SK-N-SH (cell line): ENCODE measurements at regions of chr5 and their contacts with region 1.

Region 1: GRCh38 chr5:81165493-81166119 is 67.5 kb upstream of the CKMT2 start:
- DNase-seq: peak; percentile 72
- H3K4me3 ChIP-seq: peak overlapping the region in 1 of 2 experiments; percentile 17; a peak in 1 of 4 replicates
- H3K27ac ChIP-seq: no peak overlapping the region
- H3K4me1 ChIP-seq: peaks cover 0 to 13% of the 10 kb centered on the region in 2 experiments; a peak in 1 of 4 replicates
- H3K27me3 ChIP-seq: no peaks in the 10 kb centered on the region
- CTCF ChIP-seq: peak; percentile 65
- EP300 ChIP-seq: no peak
- RAD21 ChIP-seq: peak; percentile 93

Region 2: GRCh38 chr5:80686757-80687156 is 478.8 kb before region 1 on chr5:
- CTCF ChIA-PET with region 1: interaction called, 10 read pairs
- POLR2A ChIA-PET with region 1: no interaction called
- DNase-seq: no peak
- H3K4me3 ChIP-seq: no peak overlapping the region; a peak in 1 of 4 replicates
- H3K27ac ChIP-seq: no peak overlapping the region
- H3K4me1 ChIP-seq: no peaks in the 10 kb centered on the region
- H3K27me3 ChIP-seq: no peaks in the 10 kb centered on the region
- CTCF ChIP-seq: peak; percentile 64
- EP300 ChIP-seq: no peak
- RAD21 ChIP-seq: peak; percentile 67

Region 3: DNA sequence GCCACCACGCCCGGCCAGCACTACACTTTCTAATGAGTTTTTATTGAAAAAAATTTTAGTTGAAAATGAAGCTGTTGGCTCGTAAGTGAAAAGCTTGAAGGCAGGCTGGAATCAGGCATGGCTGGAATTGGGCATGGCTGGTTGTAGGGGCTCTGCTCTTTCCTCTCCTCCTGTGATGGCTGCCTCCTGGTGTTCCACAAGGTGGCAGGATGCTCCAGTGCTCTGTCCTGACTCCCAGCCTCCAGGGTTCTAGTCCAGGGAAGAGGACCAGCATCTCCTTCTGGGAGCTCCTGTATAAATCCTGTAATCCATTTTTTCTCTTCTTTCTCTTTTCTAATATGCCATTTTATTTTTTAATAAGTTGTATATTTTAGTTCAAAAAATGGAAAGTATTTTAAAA is 453.7 kb before region 1 on chr5:
- CTCF ChIA-PET with region 1: interaction called, 24 read pairs
- POLR2A ChIA-PET with region 1: no interaction called
- DNase-seq: peak; percentile 58
- H3K4me3 ChIP-seq: no peak overlapping the region
- H3K27ac ChIP-seq: no peak overlapping the region
- H3K4me1 ChIP-seq: no peaks in the 10 kb centered on the region; a peak in 2 of 4 replicates
- H3K27me3 ChIP-seq: no peaks in the 10 kb centered on the region
- CTCF ChIP-seq: peak; percentile 53
- EP300 ChIP-seq: no peak
- RAD21 ChIP-seq: peak; percentile 77

Region 4: DNA sequence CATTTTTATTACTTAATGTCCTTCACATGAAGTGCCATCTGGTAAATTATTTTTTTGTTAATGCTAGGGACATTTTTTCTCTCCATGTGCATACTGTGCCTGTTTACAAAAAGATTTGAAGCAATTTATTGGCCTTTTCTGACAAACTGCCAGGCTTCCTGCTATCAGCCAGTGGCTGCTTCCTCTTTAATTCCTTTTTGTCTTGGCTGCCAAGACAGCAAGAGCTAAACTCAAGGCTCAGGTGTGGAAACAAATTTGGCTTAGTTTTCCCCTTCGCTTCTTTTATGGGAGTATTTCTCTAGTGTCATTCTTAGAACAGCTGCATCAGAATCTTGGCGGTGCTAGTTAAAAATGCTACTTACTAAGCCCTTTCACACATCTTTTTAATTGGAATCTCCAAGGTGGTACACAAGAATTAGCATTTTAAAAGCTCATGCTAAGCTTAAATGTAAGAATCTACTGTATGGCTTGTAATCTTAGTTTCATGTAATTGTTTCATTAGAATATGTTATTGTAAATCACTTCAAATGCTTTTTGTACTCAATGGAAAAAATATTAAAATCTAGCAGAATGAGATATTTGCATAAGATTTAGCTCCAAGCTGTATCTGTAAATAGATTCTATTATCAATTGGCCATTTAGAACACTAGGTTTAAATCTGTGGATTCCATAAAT is 339.7 kb before region 1 on chr5:
- CTCF ChIA-PET with region 1: no interaction called
- POLR2A ChIA-PET with region 1: no interaction called
- DNase-seq: no peak
- H3K4me3 ChIP-seq: no peak overlapping the region
- H3K27ac ChIP-seq: no peak overlapping the region; a peak in 1 of 4 replicates
- H3K4me1 ChIP-seq: no peaks in the 10 kb centered on the region; a peak in 1 of 4 replicates
- H3K27me3 ChIP-seq: no peaks in the 10 kb centered on the region
- CTCF ChIP-seq: no peak
- EP300 ChIP-seq: no peak
- RAD21 ChIP-seq: no peak

Region 5: GRCh38 chr5:81097713-81098112 is 67.9 kb before region 1 on chr5:
- CTCF ChIA-PET with region 1: no interaction called
- POLR2A ChIA-PET with region 1: no interaction called
- DNase-seq: no peak
- H3K4me3 ChIP-seq: no peak overlapping the region
- H3K27ac ChIP-seq: no peak overlapping the region
- H3K4me1 ChIP-seq: no peaks in the 10 kb centered on the region
- H3K27me3 ChIP-seq: no peaks in the 10 kb centered on the region
- CTCF ChIP-seq: no peak
- EP300 ChIP-seq: no peak
- RAD21 ChIP-seq: no peak

Region 6: GRCh38 chr5:81146031-81146430 is 19.6 kb before region 1 on chr5:
- CTCF ChIA-PET with region 1: interaction called, 16 read pairs
- POLR2A ChIA-PET with region 1: no interaction called
- DNase-seq: no peak
- H3K4me3 ChIP-seq: no peak overlapping the region
- H3K27ac ChIP-seq: no peak overlapping the region
- H3K4me1 ChIP-seq: peaks cover 0 to 14% of the 10 kb centered on the region in 2 experiments; a peak in 2 of 4 replicates
- H3K27me3 ChIP-seq: no peaks in the 10 kb centered on the region
- CTCF ChIP-seq: no peak
- EP300 ChIP-seq: no peak
- RAD21 ChIP-seq: no peak

Region 7: GRCh38 chr5:81151546-81151945 is 14.1 kb before region 1 on chr5:
- CTCF ChIA-PET with region 1: interaction called, 16 read pairs
- POLR2A ChIA-PET with region 1: no interaction called
- DNase-seq: no peak
- H3K4me3 ChIP-seq: no peak overlapping the region
- H3K27ac ChIP-seq: no peak overlapping the region
- H3K4me1 ChIP-seq: peaks cover 0 to 4% of the 10 kb centered on the region in 2 experiments; a peak in 2 of 4 replicates
- H3K27me3 ChIP-seq: no peaks in the 10 kb centered on the region
- CTCF ChIP-seq: no peak
- EP300 ChIP-seq: no peak
- RAD21 ChIP-seq: no peak

Region 8: DNA sequence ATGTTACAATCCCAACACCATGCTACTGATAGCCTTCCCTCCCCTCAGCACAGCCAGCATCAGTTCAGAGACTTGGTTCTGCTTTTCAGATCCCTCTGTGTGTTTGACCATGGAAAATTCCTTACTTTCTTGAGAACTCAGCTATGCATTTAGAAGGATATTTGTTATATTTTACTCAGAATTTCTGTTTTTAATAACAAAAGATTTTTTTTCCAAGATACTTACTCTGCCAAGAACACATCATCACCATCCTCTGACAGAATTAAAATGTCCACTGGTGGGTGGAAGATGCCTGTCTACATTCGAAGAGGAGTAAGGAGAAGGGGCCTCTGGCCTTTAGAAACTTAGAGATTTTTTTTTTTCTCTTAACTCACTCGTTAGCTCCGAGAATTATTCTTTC is 11.5 kb after region 1 on chr5:
- CTCF ChIA-PET with region 1: interaction called, 27 read pairs
- POLR2A ChIA-PET with region 1: no interaction called
- DNase-seq: no peak
- H3K4me3 ChIP-seq: no peak overlapping the region
- H3K27ac ChIP-seq: no peak overlapping the region
- H3K4me1 ChIP-seq: peaks cover 0 to 20% of the 10 kb centered on the region in 2 experiments; a peak in 2 of 4 replicates
- H3K27me3 ChIP-seq: no peaks in the 10 kb centered on the region
- CTCF ChIP-seq: no peak
- EP300 ChIP-seq: no peak
- RAD21 ChIP-seq: no peak

Region 9: DNA sequence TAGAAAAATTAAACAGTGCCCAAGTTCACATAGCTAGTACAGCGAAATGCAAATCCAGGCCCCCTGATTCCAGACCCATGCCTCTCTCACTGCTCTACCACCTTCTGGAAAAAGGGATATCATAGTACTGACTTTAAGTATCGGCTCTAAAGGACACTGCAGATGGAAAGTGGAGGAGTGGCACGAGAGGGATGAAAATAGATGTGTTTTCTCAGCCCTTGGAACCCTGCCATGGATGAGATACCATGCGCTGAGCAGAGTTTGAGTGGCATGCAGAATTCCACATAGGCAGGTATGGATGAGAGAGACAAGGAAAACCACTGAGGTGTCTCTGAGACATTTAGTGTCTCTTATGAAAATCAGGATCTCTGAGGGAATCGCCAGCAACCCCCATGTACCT is 86.3 kb after region 1 on chr5:
- CTCF ChIA-PET with region 1: no interaction called
- POLR2A ChIA-PET with region 1: no interaction called
- DNase-seq: no peak
- H3K4me3 ChIP-seq: no peak overlapping the region
- H3K27ac ChIP-seq: no peak overlapping the region
- H3K4me1 ChIP-seq: peaks cover 0 to 12% of the 10 kb centered on the region in 2 experiments; a peak in 1 of 4 replicates
- H3K27me3 ChIP-seq: no peaks in the 10 kb centered on the region
- CTCF ChIP-seq: no peak
- EP300 ChIP-seq: no peak
- RAD21 ChIP-seq: no peak